Heart right ventricle (tissue), 16 donors: ENCODE measurements at regions of chrX and their contacts with region 1.

Region 1: DNA sequence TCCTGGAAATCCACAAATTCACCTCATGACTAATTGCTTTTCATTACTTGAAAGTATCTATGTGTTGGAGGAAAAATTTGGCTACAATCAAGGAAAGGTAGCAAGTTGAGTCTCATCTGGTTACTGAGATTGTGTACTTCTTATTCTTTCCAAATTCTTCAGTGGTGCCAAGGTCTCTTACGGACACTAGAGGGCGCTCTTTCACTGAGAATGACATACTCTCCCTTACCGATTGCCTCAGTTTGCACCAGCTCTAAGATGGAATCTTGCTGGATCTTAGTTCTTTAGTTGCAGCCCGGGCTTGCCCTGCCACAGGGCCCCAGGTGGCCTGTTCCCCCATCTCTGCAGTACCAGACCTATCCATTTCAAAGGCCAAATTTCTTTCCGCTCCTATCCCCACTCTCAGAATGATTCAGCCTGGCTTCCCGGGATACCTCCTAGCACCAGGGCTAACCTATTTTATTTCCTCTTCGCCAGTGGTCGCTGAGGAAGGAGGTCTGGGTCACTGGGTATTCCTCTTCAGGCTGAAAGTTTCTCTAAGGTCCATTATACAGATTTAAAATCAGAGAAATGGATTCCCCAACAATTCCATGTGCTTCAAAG is 24.6 kb upstream of the GPR50 start:
- DNase-seq: peak in 1 of 2 donors; percentile 6
- ATAC-seq: peak in 1 of 8 donors; percentile 47
- H3K4me3 ChIP-seq: no peak overlapping the region
- H3K27ac ChIP-seq: no peak overlapping the region
- H3K4me1 ChIP-seq: no peaks in the 10 kb centered on the region
- H3K27me3 ChIP-seq: peaks cover 0 to 67% (median 4%) of the 10 kb centered on the region in 7 donors
- CTCF ChIP-seq: peak; percentile 43 to 84 (median 70)

Region 2: DNA sequence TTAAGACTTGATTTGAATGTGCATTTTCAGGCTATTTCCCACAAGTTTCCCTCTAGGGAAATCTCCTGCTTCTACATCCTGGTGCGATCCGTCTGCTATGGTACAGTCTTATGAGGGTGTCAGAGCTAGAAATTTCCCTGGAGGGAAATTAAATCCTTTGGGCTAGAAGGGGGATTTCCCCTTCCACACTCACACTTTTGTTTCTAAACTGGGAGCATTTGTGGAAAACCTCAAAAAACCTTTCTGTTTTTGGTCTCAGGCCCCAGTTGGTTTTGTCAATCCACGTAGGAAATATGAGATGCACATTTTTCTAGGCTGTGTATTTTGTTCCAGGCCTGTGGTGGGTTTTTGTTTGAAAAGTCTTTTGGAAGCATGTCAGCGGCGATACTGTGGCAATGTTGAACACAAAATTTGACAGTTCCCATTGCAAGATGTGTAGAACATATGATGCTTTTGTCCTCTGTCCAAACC is 150.9 kb before region 1 on chrX:
- intact Hi-C with region 1: no loop called
- DNase-seq: no peak
- ATAC-seq: no peak
- H3K4me3 ChIP-seq: no peak overlapping the region
- H3K27ac ChIP-seq: no peak overlapping the region
- H3K4me1 ChIP-seq: no peaks in the 10 kb centered on the region
- H3K27me3 ChIP-seq: no peaks in the 10 kb centered on the region
- CTCF ChIP-seq: no peak

Region 3: GRCh38 chrX:151099001-151099400 is 52.8 kb before region 1 on chrX:
- intact Hi-C with region 1: no loop called
- DNase-seq: no peak
- ATAC-seq: no peak
- H3K4me3 ChIP-seq: no peak overlapping the region
- H3K27ac ChIP-seq: no peak overlapping the region
- H3K4me1 ChIP-seq: no peaks in the 10 kb centered on the region
- H3K27me3 ChIP-seq: peaks cover 0 to 9% (median 0%) of the 10 kb centered on the region in 7 donors
- CTCF ChIP-seq: no peak

Region 4: DNA sequence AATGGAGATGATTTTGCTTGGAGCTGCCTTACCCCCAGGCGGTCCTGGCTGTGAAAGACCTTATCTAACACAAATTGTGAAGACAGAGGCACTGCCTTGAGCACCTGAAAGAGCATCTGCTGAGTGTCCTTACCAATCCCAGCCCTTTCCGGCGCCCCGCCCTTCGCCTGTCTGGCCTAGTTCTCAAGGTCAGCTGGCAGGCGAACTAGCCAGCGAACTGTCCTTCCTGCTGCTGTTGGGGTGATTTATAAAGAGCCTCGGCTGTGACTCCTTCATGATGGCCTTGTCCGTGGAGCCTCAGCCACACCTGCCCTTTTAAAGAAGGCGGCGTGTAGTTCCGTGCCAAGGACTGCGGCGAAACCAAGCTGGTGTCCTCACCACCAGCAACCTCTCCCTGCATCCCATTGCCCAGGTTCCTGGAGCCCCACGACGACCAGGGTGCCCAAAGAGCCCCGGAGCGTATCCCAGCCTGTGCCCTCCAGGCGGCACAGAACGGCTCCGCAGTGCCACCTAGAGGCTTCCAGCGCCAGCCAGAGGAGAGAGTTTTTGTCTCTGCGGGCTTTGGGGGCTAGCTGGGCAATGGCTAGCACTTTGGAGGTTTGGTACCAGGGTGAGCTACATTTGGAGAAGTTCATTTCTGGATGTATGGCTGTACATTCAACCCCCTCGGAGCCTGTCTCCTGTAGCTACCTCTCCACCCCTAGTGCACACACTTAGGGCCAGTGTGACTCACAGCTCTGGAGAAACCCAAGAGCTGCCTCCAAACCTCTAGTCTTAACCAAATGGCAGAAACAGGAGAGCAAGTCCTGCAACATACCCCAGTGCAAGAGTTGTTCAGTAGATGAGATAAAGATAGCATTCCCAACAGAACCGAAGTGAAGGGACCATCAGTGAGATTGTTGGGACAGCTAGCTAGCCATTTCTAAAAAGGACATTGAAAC is 208.4 kb after region 1 on chrX:
- intact Hi-C with region 1: loop called in 3 of 10 experiments (anchors 10 kb)
- DNase-seq: peak; percentile 3 to 30
- ATAC-seq: peak in 4 of 8 donors; percentile 42 to 77 (median 52)
- H3K4me3 ChIP-seq: no peak overlapping the region
- H3K27ac ChIP-seq: no peak overlapping the region
- H3K4me1 ChIP-seq: no peaks in the 10 kb centered on the region
- H3K27me3 ChIP-seq: peaks cover 0 to 36% (median 0%) of the 10 kb centered on the region in 7 donors
- CTCF ChIP-seq: peak; percentile 13 to 68 (median 53)

Region 5: GRCh38 chrX:151448509-151448908 is 296.7 kb after region 1 on chrX:
- intact Hi-C with region 1: no loop called
- DNase-seq: no peak
- ATAC-seq: no peak
- H3K4me3 ChIP-seq: no peak overlapping the region
- H3K27ac ChIP-seq: no peak overlapping the region
- H3K4me1 ChIP-seq: no peaks in the 10 kb centered on the region
- H3K27me3 ChIP-seq: no peaks in the 10 kb centered on the region
- CTCF ChIP-seq: no peak

Region 6: GRCh38 chrX:151505796-151506195 is 354.0 kb after region 1 on chrX:
- intact Hi-C with region 1: loop called in 1 of 10 experiments (anchors 10 kb)
- DNase-seq: no peak
- ATAC-seq: no peak
- H3K4me3 ChIP-seq: no peak overlapping the region
- H3K27ac ChIP-seq: no peak overlapping the region
- H3K4me1 ChIP-seq: no peaks in the 10 kb centered on the region
- H3K27me3 ChIP-seq: peaks cover 0 to 15% (median 0%) of the 10 kb centered on the region in 7 donors
- CTCF ChIP-seq: peak in 8 of 9 donors; percentile 6 to 48 (median 38)

Region 7: DNA sequence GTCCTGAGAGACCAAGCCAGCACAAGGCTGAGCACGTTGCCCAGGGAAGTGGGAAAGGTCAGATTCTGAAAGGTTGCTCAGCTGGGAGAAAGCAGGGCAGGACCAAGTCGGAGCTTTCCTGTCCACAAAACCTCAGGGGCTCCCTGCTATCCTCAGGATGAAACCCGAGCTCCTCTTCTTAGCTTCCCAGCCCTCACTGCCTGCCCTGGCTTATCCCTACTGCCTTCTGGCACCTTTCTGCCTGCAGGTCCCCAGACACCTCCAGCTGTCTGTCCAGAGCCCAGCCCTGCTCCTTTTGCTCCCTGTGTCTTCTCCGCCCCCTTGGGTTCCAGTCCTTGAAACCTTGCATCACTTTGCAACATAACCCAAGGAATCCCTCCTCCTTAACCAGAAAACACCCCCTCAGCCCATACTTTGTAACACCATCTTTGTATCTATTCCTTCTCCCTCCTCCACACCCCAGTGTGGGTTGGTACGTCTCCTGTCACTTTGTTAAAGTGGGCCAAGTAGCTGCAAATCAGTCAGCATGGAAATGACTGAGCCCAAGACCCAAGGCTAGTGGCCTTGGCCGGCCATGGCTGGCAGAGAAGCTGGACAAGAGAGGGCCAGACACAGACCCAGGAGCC is 523.5 kb after region 1 on chrX:
- intact Hi-C with region 1: loop called in 7 of 10 experiments (anchors 2 to 10 kb)
- DNase-seq: no peak
- ATAC-seq: no peak
- H3K4me3 ChIP-seq: no peak overlapping the region
- H3K27ac ChIP-seq: no peak overlapping the region
- H3K4me1 ChIP-seq: no peaks in the 10 kb centered on the region
- H3K27me3 ChIP-seq: peaks cover 0 to 2% (median 0%) of the 10 kb centered on the region in 7 donors
- CTCF ChIP-seq: no peak

Region 8: GRCh38 chrX:151680805-151681204 is 529.0 kb after region 1 on chrX:
- intact Hi-C with region 1: loop called in 9 of 10 experiments (anchors 1 to 10 kb)
- DNase-seq: no peak
- ATAC-seq: peak in 5 of 8 donors; percentile 33 to 63 (median 61)
- H3K4me3 ChIP-seq: no peak overlapping the region
- H3K27ac ChIP-seq: no peak overlapping the region
- H3K4me1 ChIP-seq: no peaks in the 10 kb centered on the region
- H3K27me3 ChIP-seq: peaks cover 0 to 5% (median 0%) of the 10 kb centered on the region in 7 donors
- CTCF ChIP-seq: peak; percentile 22 to 65 (median 61)

Region 9: DNA sequence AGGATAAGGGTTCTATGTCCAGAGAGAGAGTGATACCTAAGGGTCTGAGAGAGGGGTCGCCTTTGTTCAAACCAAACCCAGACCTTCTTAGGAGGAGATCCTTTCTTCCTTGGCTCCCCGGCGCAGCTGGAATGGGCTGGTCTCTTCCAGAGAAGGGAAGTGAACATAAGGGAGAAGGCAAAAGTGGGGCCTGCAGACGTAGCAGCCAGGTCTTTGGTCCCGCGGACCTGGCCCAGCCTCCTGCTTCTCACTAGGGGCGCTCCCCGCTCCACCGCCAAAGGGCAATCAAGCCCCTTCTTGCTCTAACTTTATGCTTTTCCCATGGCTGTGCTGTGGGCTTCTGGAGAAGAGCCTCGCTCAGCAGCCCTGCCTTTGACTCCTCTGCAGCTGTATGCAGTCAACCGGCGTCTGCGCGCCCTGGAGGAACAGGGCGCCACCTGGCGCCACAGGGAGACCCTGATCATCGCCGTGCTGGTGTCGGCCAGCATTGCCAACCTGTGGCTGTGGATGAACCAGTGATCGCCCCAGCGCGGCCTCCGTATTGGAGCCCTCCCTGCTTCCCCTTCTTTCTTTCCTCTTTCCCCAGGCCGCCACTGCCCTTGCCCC is 570.6 kb after region 1 on chrX:
- intact Hi-C with region 1: loop called in 2 of 10 experiments (anchors 5 kb)
- DNase-seq: peak; percentile 13 to 40
- ATAC-seq: peak in 6 of 8 donors; percentile 27 to 69 (median 54)
- H3K4me3 ChIP-seq: no peak overlapping the region
- H3K27ac ChIP-seq: peak overlapping the region in 5 of 10 donors; percentile 25 to 56 (median 47)
- H3K4me1 ChIP-seq: peaks cover 0 to 18% (median 10%) of the 10 kb centered on the region in 9 donors
- H3K27me3 ChIP-seq: peaks cover 0 to 4% (median 0%) of the 10 kb centered on the region in 7 donors
- CTCF ChIP-seq: peak in 8 of 9 donors; percentile 17 to 53 (median 36)

Region 10: DNA sequence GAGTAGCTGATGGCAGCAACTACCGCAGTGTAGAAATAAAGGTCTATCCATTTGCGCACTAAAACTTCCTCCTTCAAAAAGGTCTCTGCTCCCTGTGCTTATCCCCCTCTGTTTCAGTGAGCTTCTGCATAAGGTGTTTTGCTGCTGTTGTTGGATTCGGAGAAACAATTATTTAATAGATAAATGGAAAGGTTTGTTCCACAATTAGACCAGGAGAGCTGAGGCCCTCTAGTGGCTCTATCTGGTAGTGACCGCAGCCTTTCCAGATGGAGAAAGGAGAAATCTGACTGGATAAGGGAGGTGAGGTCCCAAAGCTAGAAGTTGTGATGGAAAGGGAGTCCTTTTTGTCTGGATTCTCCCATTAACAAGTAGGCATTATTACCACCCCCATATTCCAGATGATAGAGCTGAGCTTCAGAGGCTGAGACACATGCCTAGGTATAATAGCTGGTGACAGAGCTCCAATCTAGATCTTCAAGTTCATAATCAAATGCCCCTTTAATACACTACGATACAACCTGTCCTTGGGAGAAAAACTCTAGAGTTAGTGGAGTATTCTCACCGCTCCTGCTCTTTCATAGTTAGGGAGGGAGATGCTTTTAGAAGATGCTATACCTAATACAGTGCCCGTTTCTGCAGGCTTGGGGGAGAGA is 1480.8 kb after region 1 on chrX:
- intact Hi-C with region 1: loop called in 3 of 10 experiments (anchors 5 to 10 kb)
- DNase-seq: peak; percentile 13 to 20
- ATAC-seq: no peak
- H3K4me3 ChIP-seq: no peak overlapping the region
- H3K27ac ChIP-seq: no peak overlapping the region
- H3K4me1 ChIP-seq: no peaks in the 10 kb centered on the region
- H3K27me3 ChIP-seq: peaks cover 0 to 43% (median 6%) of the 10 kb centered on the region in 7 donors
- CTCF ChIP-seq: peak; percentile 43 to 84 (median 70)